ENCODE measurements at regions of chr6 and their contacts with region 1.

Region 1: DNA sequence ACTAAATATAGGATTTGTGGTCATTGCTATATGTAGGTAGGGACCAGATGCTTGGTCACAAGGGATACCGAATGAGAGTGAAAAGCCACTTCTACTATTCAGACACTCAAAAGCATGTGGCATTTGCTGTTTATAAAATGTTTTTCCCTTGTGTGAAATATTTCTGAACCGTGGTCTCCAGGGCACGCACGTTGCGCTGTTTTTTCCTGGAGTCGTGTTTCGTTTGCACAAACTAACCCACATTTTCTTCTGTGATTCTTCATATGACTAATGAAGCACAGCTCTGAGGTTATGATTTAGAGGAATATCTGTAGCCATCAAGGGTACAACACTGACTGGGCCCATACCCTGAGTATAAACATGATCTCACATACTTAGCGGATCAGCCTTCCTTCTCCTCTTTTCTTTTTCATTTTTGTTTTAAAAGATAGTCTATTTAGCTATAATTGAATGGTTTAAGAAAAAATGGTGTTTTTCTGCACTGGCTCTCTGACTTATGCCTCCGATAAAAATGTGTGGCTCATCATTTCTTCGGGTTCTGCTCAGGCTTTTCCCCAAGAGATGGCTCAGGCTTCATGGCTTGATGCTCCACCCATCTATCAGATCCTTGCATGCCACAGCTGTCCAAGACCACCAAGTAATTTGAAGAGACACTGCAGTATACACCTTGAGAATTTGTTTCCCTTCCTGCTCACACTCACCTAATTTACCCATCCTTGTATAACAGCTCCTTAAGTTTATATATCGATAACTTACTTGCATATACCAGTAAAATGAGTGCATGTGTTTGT is 59.9 kb upstream of the HBS1L start:
- DNase-seq: peak; percentile 86
- H3K4me3 Mint-ChIP-seq: peak overlapping the region; percentile 44
- H3K27ac Mint-ChIP-seq: peak overlapping the region; percentile 96
- H3K4me1 Mint-ChIP-seq: peaks cover 65% of the 10 kb centered on the region
- H3K27me3 Mint-ChIP-seq: no peaks in the 10 kb centered on the region

Region 2: GRCh38 chr6:134247231-134247833 is 867.2 kb before region 1 on chr6:
- CTCF ChIA-PET with region 1: no interaction called
- POLR2A ChIA-PET with region 1: no interaction called
- intact Hi-C with region 1: loop called (anchors 2 kb)
- DNase-seq: peak; percentile 86
- H3K4me3 Mint-ChIP-seq: peak overlapping the region; percentile 20
- H3K27ac Mint-ChIP-seq: peak overlapping the region; percentile 86
- H3K4me1 Mint-ChIP-seq: peaks cover 51% of the 10 kb centered on the region
- H3K27me3 Mint-ChIP-seq: no peaks in the 10 kb centered on the region

Region 3: DNA sequence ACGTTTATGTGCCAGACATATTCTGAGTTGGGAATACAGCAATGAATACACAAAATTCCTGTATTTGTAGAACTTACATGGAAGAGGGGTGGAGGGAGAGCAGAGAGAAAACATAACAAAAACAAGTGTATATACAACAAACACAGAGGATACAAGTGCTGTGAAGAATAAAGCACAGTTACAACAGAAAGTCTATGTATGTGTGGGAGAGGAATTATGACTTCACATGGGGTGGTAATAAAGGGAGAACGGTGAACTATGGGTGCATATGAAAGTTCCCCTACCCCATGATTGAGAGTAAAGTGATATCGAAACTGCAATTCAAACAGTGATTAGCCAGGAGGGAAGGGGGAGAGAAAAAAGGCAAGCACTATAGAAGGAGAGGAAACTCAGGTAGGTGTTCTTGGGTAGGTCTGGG is 84.5 kb before region 1 on chr6:
- CTCF ChIA-PET with region 1: no interaction called
- POLR2A ChIA-PET with region 1: no interaction called
- intact Hi-C with region 1: loop called (anchors 1 kb)
- DNase-seq: no peak
- H3K4me3 Mint-ChIP-seq: peak overlapping the region; percentile 0
- H3K27ac Mint-ChIP-seq: peak overlapping the region; percentile 52
- H3K4me1 Mint-ChIP-seq: peaks cover 58% of the 10 kb centered on the region
- H3K27me3 Mint-ChIP-seq: no peaks in the 10 kb centered on the region

Region 4: DNA sequence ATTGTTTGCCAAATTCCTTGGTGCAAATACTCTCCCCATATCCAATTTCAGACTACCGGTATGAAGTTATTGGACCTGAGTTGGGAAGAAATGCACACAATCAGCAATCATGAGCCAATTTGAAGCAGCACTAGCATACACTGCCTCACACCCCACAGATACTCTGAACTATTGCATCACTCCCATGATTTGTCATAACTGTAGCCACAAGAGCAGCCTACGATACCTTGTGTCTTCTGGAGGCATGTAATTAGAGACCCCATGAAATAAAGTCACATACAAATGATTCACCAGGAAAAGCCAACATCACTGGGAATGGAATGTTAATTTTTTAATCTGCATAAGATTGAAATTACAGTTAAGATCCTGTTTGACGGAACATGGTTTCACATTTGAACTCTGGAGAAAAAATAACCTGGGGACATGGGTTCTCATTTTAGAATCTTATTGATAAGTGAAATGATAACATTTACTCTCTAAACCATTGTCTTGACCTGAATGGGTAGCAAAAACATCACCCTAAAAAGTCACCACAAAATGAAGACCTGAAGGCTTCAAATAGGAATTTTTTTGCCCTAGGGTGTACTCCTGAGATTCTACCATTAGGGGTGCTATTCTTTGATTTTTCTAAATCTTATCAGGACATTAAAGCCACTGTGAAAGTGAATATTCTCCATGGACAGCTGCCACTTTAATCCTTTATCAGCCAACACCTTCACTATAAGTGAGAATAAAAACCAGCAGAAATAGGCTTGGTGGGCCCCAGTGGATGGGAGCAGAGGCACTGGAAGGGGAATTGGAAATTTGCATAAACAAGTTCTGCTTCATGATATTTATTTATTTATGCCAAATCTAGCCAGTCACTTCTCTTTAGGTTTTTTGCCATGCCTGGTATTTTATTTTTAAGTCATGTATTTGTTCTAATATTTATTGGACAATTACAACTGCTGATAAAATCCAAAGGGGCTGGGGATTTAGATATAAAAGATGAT is 25.4 kb before region 1 on chr6:
- CTCF ChIA-PET with region 1: interaction called, 9 read pairs
- POLR2A ChIA-PET with region 1: interaction called, 20 read pairs
- intact Hi-C with region 1: loop called (anchors 1 kb)
- DNase-seq: peak; percentile 56
- H3K4me3 Mint-ChIP-seq: peak overlapping the region; percentile 34
- H3K27ac Mint-ChIP-seq: peak overlapping the region; percentile 75
- H3K4me1 Mint-ChIP-seq: peaks cover 83% of the 10 kb centered on the region
- H3K27me3 Mint-ChIP-seq: no peaks in the 10 kb centered on the region

Region 5: GRCh38 chr6:135128268-135128914 is 13.8 kb after region 1 on chr6:
- CTCF ChIA-PET with region 1: interaction called, 3 read pairs
- POLR2A ChIA-PET with region 1: interaction called, 7 read pairs
- intact Hi-C with region 1: loop called (anchors 1 kb)
- DNase-seq: peak; percentile 82
- H3K4me3 Mint-ChIP-seq: peak overlapping the region; percentile 24
- H3K27ac Mint-ChIP-seq: peak overlapping the region; percentile 81
- H3K4me1 Mint-ChIP-seq: peaks cover 42% of the 10 kb centered on the region
- H3K27me3 Mint-ChIP-seq: no peaks in the 10 kb centered on the region

Region 6: DNA sequence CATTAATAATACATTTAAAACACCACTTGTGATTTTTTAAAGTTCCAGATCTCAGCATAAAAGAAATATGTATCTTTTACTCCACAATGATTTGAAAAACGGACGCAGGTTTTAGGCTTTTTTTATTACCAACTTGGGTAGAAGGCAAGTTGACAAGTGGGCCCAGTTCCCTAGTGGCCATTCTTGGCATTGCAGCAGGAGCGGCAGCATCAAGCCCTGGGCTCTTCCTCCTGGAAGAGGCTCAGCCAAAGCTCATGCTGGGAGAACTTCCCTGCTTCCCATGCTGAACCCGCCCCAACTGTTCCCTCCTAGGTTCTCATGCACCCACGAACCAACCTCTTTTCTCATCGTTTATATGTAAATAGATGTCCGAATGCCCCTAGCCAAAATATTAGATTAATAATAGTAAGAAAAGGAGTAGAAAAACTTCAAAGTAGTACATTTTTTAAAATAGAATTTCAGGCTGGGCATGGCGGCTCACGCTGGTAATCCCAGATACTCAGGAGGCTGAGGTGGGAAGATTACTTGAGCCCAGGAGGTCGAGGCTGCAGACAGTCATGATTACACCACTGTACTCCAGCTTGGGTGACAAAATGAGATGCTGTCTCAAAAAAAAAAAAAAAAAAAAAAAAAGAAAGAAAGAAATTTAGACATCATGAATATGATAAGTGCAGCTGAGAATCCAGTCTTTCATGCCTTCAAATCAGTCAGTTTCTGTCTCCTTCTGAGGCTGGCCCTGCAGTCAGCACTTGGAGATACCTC is 48.3 kb after region 1 on chr6:
- CTCF ChIA-PET with region 1: interaction called, 7 read pairs
- POLR2A ChIA-PET with region 1: interaction called, 3 read pairs
- intact Hi-C with region 1: loop called (anchors 1 kb)
- DNase-seq: peak; percentile 54
- H3K4me3 Mint-ChIP-seq: peak overlapping the region; percentile 49
- H3K27ac Mint-ChIP-seq: peak overlapping the region; percentile 78
- H3K4me1 Mint-ChIP-seq: peaks cover 61% of the 10 kb centered on the region
- H3K27me3 Mint-ChIP-seq: peaks cover 3% of the 10 kb centered on the region

Region 7: GRCh38 chr6:135212020-135212806 is 97.7 kb after region 1 on chr6:
- CTCF ChIA-PET with region 1: interaction called, 3 read pairs
- POLR2A ChIA-PET with region 1: no interaction called
- intact Hi-C with region 1: loop called (anchors 1 kb)
- DNase-seq: peak; percentile 55
- H3K4me3 Mint-ChIP-seq: peak overlapping the region; percentile 4
- H3K27ac Mint-ChIP-seq: peak overlapping the region; percentile 30
- H3K4me1 Mint-ChIP-seq: peaks cover 38% of the 10 kb centered on the region
- H3K27me3 Mint-ChIP-seq: no peaks in the 10 kb centered on the region

Region 8: DNA sequence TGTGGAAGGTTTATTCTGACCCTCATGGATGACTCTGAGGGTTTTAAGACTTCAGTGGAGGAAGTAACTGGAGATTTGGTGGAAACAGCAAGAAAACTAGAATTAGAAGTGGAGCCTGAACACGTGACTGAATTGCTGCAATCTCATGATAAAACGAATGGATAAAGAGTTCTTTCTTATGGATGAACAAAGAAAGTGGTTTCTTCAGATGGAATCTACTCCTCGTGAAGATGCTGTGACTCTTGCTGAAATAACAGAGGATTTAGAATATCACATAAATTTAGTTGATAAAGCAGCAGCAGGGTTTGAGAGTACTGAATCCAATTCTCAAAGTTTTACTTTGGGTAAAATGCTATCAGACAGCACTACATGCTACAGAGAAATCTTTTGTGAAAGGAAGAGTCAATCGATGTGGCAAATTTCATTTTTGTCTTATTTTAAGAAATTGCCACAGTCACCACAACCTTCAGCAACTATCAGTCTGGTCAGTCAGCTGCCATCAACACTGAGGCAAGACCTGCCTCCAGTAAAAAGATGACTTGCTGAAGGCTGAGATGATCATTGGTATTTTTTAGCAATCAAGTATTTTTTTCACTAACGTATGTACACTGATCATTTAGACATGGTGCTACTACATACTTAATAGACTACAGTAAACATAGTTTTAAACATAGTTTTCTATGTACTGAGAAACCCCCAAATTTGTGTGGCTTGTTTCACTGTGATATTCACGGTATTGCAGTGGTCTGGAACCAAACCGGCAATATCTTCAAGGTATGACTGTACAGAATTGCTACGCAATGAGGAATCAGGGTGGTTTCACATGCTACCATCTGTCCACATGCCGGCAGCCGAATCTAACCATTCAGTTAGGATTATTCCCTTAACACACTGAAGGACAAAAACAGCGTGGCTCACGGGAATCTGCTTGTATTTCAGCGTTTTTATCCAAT is 215.6 kb after region 1 on chr6:
- CTCF ChIA-PET with region 1: no interaction called
- POLR2A ChIA-PET with region 1: no interaction called
- intact Hi-C with region 1: no loop called
- DNase-seq: no peak
- H3K4me3 Mint-ChIP-seq: no peak overlapping the region
- H3K27ac Mint-ChIP-seq: no peak overlapping the region
- H3K4me1 Mint-ChIP-seq: no peaks in the 10 kb centered on the region
- H3K27me3 Mint-ChIP-seq: no peaks in the 10 kb centered on the region